Activated CD4-positive, alpha-beta T cell treated with anti-CD3 and anti-CD28 coated beads for 36 hours (primary cell): ENCODE measurements at regions of chr3 and their contacts with region 1.

Region 1: GRCh38 chr3:44338010-44338827 is at the start of gene TCAIM:
- DNase-seq: peak; percentile 99
- ATAC-seq: peak; percentile 98
- H3K4me3 Mint-ChIP-seq: peak within 1 kb of the TSS; percentile 90
- H3K27ac Mint-ChIP-seq: peak within 1 kb of the TSS; percentile 98
- H3K4me1 Mint-ChIP-seq: peaks cover 18% of the 10 kb centered on the region
- H3K27me3 Mint-ChIP-seq: peaks cover 3% of the 10 kb centered on the region
- total RNA-seq, gene TCAIM: 14.8 to 17.0 TPM

Region 2: DNA sequence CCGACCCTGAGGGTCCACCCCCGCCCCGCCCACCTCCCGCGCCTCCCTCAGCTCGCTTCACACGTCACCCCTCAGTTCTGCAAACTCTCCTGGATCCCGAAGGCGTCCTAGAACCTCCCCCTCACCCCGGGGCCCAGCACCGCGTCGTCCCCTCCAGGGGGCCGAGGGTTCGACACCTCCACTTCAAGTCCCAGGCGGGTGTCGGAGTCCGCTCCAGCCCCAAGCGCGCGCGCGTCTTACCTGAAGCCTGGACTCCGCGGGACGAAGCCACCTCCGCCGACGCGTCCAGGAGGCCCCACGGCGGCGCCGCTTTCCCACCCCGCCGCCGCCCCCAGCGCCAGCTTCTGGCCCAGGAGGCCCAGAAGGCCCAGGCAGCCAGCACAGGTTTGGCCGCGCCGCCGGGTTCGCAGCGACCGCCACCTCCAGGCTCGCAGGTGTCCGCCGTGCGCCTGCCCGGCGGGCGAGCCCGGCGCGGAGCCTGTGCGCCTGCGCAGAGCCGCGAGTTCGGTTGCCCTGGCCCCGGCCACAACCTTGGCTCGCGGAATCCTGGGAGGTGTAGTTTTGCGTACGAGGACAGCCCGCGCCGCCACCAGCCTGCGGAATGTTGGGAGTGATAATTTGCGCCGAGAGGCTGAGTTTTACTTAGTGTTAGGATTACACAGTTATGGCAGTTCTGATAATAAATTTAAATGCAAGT is 1232.5 kb before region 1 on chr3 and contains the start of gene POMGNT2:
- CTCF ChIA-PET with region 1: no interaction called
- POLR2A ChIA-PET with region 1: no interaction called
- intact Hi-C with region 1: loop called in 1 of 2 experiments (anchors 1 kb)
- DNase-seq: peak; percentile 94
- ATAC-seq: peak; percentile 97
- H3K4me3 Mint-ChIP-seq: peak within 1 kb of the TSS; percentile 72
- H3K27ac Mint-ChIP-seq: peak within 1 kb of the TSS; percentile 58
- H3K4me1 Mint-ChIP-seq: peaks cover 16% of the 10 kb centered on the region
- H3K27me3 Mint-ChIP-seq: no peaks in the 10 kb centered on the region
- total RNA-seq, gene POMGNT2: 8.3 to 8.6 TPM

Region 3: DNA sequence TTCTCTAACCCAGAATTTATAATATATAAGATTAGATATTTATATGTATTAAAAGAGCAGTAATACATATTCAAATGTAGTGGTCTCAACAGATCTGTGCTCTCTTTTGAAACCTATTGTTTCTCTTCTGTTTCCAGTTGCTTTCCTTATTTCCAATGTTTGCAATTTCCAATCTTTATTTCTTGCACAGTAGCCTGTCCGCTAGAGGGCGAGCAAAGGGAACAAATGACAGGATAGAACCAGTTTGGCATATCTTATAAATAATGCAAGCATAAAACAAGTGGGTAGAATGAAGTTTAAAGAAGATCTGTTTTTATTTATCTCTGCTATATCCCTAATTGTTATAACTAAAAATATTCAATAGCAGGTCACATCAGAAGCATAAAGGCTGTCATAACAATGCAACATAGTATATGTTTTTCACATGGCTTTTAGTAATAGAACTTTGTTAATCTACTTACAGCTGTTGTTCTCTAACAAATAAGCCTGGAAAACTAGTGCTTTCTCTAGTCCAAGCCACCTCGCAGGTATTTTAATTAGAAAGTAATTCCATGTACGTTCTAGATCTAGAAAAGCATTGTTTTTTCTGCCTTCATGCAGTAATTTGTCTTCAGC is 14.8 kb before region 1 on chr3:
- CTCF ChIA-PET with region 1: interaction called, 16 read pairs
- POLR2A ChIA-PET with region 1: no interaction called
- intact Hi-C with region 1: no loop called
- DNase-seq: peak; percentile 75
- ATAC-seq: no peak
- H3K4me3 Mint-ChIP-seq: no peak overlapping the region
- H3K27ac Mint-ChIP-seq: no peak overlapping the region
- H3K4me1 Mint-ChIP-seq: no peaks in the 10 kb centered on the region
- H3K27me3 Mint-ChIP-seq: peaks cover 2% of the 10 kb centered on the region

Region 4: DNA sequence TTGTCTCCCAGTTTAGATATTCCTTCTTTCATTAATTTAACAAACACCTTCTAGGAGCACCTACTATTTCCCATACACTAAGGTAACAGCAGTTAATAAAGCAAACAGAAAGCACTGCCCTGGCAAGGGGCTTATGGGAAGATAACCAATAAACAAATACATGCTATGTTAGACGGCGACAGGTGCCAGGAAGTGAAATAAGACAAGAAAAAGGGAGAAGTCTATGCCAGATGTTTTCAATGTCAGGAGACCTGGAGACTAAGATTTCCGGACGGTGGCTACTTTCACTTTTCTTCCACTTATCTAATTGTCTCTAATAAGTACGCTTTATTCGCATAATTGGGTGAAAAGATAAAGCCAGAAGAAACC is 171.8 kb after region 1 on chr3:
- CTCF ChIA-PET with region 1: no interaction called
- POLR2A ChIA-PET with region 1: no interaction called
- intact Hi-C with region 1: loop called (anchors 1 to 5 kb)
- DNase-seq: no peak
- ATAC-seq: no peak
- H3K4me3 Mint-ChIP-seq: peak overlapping the region; percentile 77
- H3K27ac Mint-ChIP-seq: peak overlapping the region; percentile 76
- H3K4me1 Mint-ChIP-seq: peaks cover 30% of the 10 kb centered on the region
- H3K27me3 Mint-ChIP-seq: no peaks in the 10 kb centered on the region

Region 5: DNA sequence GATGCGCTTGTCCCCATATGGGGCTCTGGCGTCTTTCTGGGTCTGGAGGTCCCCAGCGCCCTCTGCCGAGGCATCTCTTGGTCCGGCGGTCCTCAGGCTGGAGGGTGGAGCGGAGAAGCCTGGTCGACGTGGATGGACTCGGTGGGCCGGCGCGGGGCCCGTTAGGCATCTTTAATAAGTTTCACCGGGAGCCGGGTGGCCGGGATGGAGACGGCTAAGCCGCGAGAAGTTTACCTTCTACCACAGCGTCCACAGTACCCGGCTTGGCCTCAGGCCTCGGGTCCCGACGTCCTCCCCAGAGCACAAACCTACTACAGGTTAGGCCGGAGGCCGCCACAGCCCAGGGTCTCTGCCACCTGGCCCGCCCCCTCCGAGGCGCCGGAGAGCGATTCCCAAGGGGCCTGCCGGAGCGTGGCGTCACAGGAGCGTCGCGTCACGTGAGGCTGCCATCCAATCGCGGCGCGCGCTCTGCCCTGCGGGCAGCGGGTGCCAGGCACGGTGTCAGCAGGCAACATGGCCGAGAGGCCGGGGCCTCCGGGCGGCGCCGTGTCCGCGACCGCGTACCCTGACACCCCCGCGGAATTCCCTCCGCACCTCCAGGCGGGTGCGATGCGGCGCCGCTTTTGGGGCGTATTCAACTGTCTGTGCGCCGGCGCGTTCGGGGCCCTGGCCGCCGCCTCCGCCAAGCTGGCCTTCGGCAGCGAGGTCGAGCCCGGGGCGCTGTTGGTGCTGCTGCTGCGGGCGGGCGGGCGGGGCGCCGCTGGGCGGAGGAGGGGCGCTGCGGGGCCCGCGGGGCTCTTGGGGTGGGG is 523.4 kb after region 1 on chr3 and contains the start of gene TMEM42:
- CTCF ChIA-PET with region 1: interaction called, 3 read pairs
- POLR2A ChIA-PET with region 1: no interaction called
- intact Hi-C with region 1: loop called in 1 of 2 experiments (anchors 1 kb)
- DNase-seq: peak; percentile 91
- ATAC-seq: peak; percentile 96
- H3K4me3 Mint-ChIP-seq: peak within 1 kb of the TSS; percentile 78
- H3K27ac Mint-ChIP-seq: peak within 1 kb of the TSS; percentile 73
- H3K4me1 Mint-ChIP-seq: peaks cover 34% of the 10 kb centered on the region
- H3K27me3 Mint-ChIP-seq: no peaks in the 10 kb centered on the region
- total RNA-seq, gene TMEM42: 7.6 to 10.9 TPM